Natural killer cell (primary cell): ENCODE measurements at regions of chr19 and their contacts with region 1.

Region 1: GRCh38 chr19:36665832-36666231 is 805 bp downstream of the ZNF461 start:
- DNase-seq: peak in 1 of 2 donors; percentile 10
- ATAC-seq: no peak
- H3K4me3 ChIP-seq: peak overlapping the region; percentile 80
- H3K4me3 Mint-ChIP-seq: peak overlapping the region; percentile 100
- H3K27ac ChIP-seq: no peak overlapping the region
- H3K27ac Mint-ChIP-seq: peak overlapping the region; percentile 98
- H3K4me1 ChIP-seq: peaks cover 20% of the 10 kb centered on the region
- H3K4me1 Mint-ChIP-seq: peaks cover 34 to 40% of the 10 kb centered on the region in 2 donors
- H3K27me3 ChIP-seq: no peaks in the 10 kb centered on the region
- H3K27me3 Mint-ChIP-seq: no peaks in the 10 kb centered on the region
- CTCF ChIP-seq: no peak

Region 2: DNA sequence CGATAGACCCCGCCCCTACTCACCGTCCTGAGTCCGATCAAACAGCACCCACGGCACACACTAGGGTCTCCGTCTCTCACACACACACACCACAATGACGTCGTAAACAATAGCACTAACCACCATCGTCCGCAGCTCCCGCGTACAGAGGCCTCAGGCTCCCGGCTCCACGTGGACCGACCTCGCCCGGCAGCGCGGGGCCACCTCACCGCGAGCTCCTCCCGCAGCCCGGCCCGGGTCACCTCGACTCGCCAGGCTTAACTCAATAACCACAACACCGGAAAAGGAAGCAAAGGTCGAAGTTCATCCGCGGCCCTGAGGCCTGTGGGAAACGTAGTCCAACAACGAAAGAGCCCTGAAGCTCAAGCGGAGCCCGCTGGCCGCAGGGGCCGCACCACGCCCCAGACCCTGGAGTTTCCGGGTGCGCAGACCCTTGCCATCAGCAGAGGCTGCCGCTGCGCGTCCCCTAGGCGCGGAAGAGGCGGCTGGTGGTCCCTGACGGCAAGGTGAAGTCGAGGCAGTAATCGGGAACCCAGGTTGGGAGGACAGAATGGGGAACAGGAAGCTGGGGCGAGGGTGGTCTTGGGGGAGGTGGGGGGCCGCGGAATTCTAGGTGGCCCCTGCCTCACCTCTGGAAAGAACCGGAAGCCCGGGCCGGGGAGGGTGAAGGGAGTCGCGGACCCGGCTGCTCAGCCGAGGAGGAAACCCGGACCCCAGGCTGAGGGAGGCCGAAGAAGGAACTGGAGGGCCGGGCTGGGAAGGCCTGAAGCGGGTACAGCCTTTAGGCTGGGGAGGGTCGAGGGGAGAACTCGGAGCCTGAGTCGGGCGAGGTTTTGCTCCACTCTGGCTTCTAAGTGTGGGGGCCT is 92.6 kb before region 1 on chr19 and contains the start of gene ZNF529:
- intact Hi-C with region 1: loop called (anchors 1 kb)
- DNase-seq: peak; percentile 88 to 95
- ATAC-seq: peak; percentile 90 to 97 (median 90)
- H3K4me3 ChIP-seq: peak within 1 kb of the TSS; percentile 83
- H3K4me3 Mint-ChIP-seq: peak within 1 kb of the TSS; percentile 89
- H3K27ac ChIP-seq: peak within 1 kb of the TSS; percentile 86
- H3K27ac Mint-ChIP-seq: peak within 1 kb of the TSS; percentile 91 to 100
- H3K4me1 ChIP-seq: peaks cover 17% of the 10 kb centered on the region
- H3K4me1 Mint-ChIP-seq: peaks cover 36% of the 10 kb centered on the region in 2 donors
- H3K27me3 ChIP-seq: no peaks in the 10 kb centered on the region
- H3K27me3 Mint-ChIP-seq: no peaks in the 10 kb centered on the region
- CTCF ChIP-seq: no peak
- total RNA-seq, gene ZNF529: 23.5 to 36.4 (median 29.2) TPM

Region 3: DNA sequence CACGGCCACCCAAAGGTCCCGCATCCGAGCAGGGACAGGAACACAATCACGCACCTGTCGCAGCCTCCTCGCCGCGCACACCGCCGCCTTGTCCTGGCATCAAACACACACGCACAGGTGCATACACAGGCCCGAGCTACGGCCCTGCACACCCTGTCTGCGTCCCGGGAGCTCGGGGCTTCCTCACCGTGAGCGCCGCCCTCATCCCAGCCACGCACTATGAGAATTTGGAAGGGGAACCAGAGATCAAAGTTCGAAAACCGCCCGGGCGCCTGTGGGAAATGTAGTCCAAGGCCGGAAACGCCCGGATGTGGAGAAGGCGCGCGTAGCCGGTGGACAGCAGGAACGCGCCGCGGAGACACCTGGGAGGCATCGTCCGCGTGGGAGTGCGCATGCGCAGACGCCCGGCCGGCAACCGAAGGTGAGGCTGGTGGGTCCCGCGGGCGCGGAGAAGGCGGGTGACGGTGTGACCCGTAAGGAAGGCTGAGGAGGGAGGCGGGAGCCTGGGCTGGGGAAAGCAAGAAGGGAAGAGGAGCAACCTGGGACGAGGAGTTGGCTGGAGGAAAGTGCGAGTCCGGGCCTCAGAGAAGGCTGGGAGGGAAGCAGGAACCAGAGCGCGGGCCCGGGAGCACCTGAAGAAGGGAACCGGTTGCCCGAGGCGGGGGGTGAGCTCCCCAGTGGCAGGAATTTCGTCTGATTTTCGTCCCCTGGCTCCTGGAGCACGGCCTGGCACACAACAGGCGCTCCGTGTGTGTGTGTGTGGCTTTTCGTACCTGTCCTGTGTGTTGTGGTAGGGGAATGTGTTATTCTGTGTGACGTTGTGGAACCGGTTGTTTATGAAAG is 21.6 kb after region 1 on chr19 and contains the start of gene ZNF567:
- intact Hi-C with region 1: loop called (anchors 2 kb)
- DNase-seq: peak; percentile 92 to 98
- ATAC-seq: peak; percentile 91 to 96 (median 95)
- H3K4me3 ChIP-seq: peak within 1 kb of the TSS; percentile 90
- H3K4me3 Mint-ChIP-seq: peak within 1 kb of the TSS; percentile 98
- H3K27ac ChIP-seq: peak within 1 kb of the TSS; percentile 80
- H3K27ac Mint-ChIP-seq: peak within 1 kb of the TSS; percentile 93 to 99
- H3K4me1 ChIP-seq: peaks cover 18% of the 10 kb centered on the region
- H3K4me1 Mint-ChIP-seq: peaks cover 28 to 39% of the 10 kb centered on the region in 2 donors
- H3K27me3 ChIP-seq: no peaks in the 10 kb centered on the region
- H3K27me3 Mint-ChIP-seq: no peaks in the 10 kb centered on the region
- CTCF ChIP-seq: no peak
- total RNA-seq, gene ZNF567: 5.6 to 11.8 (median 10.5) TPM